Dendritic cell treated with granulocyte-macrophage colony-stimulating factor and Interleukin-4, amounts not matched to agents 40 ng/mL and 50 ng/mL, for 4 days (primary cell): ENCODE measurements at regions of chr1 and their contacts with region 1.

Region 1: GRCh38 chr1:112395821-112396652 is at the start of gene CTTNBP2NL:
- H3K4me3 Mint-ChIP-seq: peak within 1 kb of the TSS; percentile 98
- H3K27ac Mint-ChIP-seq: peak within 1 kb of the TSS; percentile 98
- H3K4me1 Mint-ChIP-seq: peaks cover 76% of the 10 kb centered on the region
- H3K27me3 Mint-ChIP-seq: no peaks in the 10 kb centered on the region

Region 2: DNA sequence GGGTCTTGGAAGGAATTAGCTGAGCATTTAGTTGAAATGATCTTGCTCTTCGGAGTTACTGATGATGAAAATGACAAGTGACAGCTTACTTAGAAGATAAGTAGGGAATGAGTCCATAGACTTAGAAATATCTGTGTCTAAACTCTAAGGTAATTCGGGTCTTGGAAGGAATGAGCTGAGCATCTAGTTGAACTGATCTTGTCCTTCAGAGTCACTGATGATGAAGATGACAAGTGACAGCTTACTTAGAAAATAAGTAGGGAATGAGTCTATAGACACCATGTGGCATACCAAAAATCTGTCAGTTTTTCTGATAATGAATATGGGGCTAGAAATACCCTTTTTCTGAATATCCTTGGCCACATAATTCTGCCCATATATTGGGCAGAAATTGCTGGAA is 14.6 kb after region 1 on chr1:
- intact Hi-C with region 1: loop called (anchors 2 kb)
- H3K4me3 Mint-ChIP-seq: no peak overlapping the region
- H3K27ac Mint-ChIP-seq: no peak overlapping the region
- H3K4me1 Mint-ChIP-seq: peaks cover 27% of the 10 kb centered on the region
- H3K27me3 Mint-ChIP-seq: no peaks in the 10 kb centered on the region

Region 3: DNA sequence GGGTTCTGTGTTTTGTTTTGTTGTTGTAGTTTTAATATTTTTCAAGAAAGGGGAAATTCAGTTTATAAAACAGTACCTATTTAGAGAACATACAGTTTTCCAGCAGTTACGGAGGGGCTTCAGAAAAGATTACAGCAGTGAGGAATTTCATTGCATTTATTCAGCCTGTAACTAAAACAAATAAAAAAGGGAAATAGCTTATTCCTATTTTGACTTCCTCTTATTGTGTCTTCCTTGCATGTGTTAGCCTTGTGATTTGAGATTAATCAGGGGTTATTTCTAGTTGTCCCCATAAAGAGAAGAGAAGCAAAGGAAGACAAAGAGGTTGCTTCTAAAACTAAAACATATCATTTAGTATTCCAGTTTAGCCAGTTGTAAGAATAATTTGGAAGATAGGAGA is 35.0 kb after region 1 on chr1:
- intact Hi-C with region 1: loop called (anchors 5 kb)
- H3K4me3 Mint-ChIP-seq: peak overlapping the region; percentile 49
- H3K27ac Mint-ChIP-seq: peak overlapping the region; percentile 95
- H3K4me1 Mint-ChIP-seq: peaks cover 36% of the 10 kb centered on the region
- H3K27me3 Mint-ChIP-seq: no peaks in the 10 kb centered on the region

Region 4: GRCh38 chr1:112619520-112620376 is 223.7 kb after region 1 on chr1 and contains the start of gene CAPZA1:
- intact Hi-C with region 1: loop called (anchors 2 kb)
- H3K4me3 Mint-ChIP-seq: peak within 1 kb of the TSS; percentile 97
- H3K27ac Mint-ChIP-seq: peak within 1 kb of the TSS; percentile 99
- H3K4me1 Mint-ChIP-seq: peaks cover 29% of the 10 kb centered on the region
- H3K27me3 Mint-ChIP-seq: no peaks in the 10 kb centered on the region